Activated T-helper 1 cell treated with anti-CD3 and anti-CD28 coated beads, Interleukin-12 subunit alpha, Interleukin-12 subunit beta, Interleukin-2, Interleukin-4 antibody, amounts not matched to agents 30 ng/mL and 10 ng/mL and 1 ng/mL, durations not matched to agents 14 hours and 24 hours and 36 hours (primary cell): ENCODE measurements at regions of chr14 and their contacts with region 1.

Region 1: GRCh38 chr14:89681086-89682018 is 264.3 kb upstream of the FOXN3 start:
- DNase-seq: peak; percentile 22
- H3K4me3 Mint-ChIP-seq: peak overlapping the region; percentile 66
- H3K27ac Mint-ChIP-seq: peak overlapping the region; percentile 89
- H3K4me1 Mint-ChIP-seq: peaks cover 45% of the 10 kb centered on the region
- H3K27me3 Mint-ChIP-seq: no peaks in the 10 kb centered on the region

Region 2: DNA sequence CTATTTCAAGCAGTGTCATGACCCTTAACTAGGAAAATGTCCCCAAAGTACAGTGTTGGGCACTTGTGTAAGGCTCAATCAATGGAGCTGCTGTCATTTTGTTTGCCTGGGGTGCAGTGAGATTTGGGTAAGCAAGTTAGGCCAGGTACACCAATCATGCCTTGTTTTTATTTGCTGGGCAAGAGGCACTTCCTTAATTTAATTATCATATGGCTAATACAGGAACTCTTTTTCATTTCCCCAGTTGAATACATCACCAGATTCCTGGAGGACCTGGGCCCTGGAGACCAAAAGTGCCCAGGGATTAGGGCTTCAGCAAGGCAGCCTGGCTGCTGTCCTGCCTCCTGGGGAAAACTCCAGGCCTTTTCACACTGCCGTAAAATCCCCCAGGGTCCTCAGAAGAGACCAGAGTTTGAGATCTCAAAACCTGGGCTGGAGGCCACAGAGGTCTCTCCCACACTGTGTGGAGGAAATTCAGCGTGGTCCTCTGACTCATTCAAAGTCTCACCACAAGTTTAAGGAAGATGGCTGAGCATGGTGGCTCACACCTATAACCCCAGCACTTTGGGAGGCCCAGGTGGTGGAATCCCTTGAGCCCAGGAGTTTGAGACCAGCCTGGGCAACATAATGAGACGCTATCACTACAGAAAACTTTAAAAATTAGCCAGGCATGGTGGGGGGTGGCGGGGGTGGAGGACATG is 235.9 kb before region 1 on chr14:
- intact Hi-C with region 1: loop called (anchors 1 kb)
- DNase-seq: peak; percentile 11
- H3K4me3 Mint-ChIP-seq: peak overlapping the region; percentile 37
- H3K27ac Mint-ChIP-seq: peak overlapping the region; percentile 83
- H3K4me1 Mint-ChIP-seq: peaks cover 54% of the 10 kb centered on the region
- H3K27me3 Mint-ChIP-seq: no peaks in the 10 kb centered on the region

Region 3: GRCh38 chr14:89613260-89614008 is 67.9 kb before region 1 on chr14:
- intact Hi-C with region 1: loop called (anchors 1 kb)
- DNase-seq: no peak
- H3K4me3 Mint-ChIP-seq: peak overlapping the region; percentile 69
- H3K27ac Mint-ChIP-seq: peak overlapping the region; percentile 79
- H3K4me1 Mint-ChIP-seq: peaks cover 75% of the 10 kb centered on the region
- H3K27me3 Mint-ChIP-seq: no peaks in the 10 kb centered on the region

Region 4: GRCh38 chr14:89701211-89702043 is 20.1 kb after region 1 on chr14:
- intact Hi-C with region 1: loop called (anchors 1 kb)
- DNase-seq: peak; percentile 78
- H3K4me3 Mint-ChIP-seq: peak overlapping the region; percentile 70
- H3K27ac Mint-ChIP-seq: peak overlapping the region; percentile 84
- H3K4me1 Mint-ChIP-seq: peaks cover 51% of the 10 kb centered on the region
- H3K27me3 Mint-ChIP-seq: peaks cover 4% of the 10 kb centered on the region

Region 5: GRCh38 chr14:89750281-89750755 is 69.0 kb after region 1 on chr14:
- intact Hi-C with region 1: loop called (anchors 1 kb)
- DNase-seq: no peak
- H3K4me3 Mint-ChIP-seq: no peak overlapping the region
- H3K27ac Mint-ChIP-seq: no peak overlapping the region
- H3K4me1 Mint-ChIP-seq: peaks cover 23% of the 10 kb centered on the region
- H3K27me3 Mint-ChIP-seq: no peaks in the 10 kb centered on the region